AG04450 (cell line): ENCODE measurements at regions of chr9 and their contacts with region 1.

Region 1: GRCh38 chr9:87684627-87685219 is 41.2 kb upstream of the CTSL start:
- DNase-seq: no peak
- H3K4me3 ChIP-seq: no peak overlapping the region
- H3K27ac ChIP-seq: no peak overlapping the region
- H3K27me3 ChIP-seq: no peaks in the 10 kb centered on the region
- CTCF ChIP-seq: peak; percentile 80

Region 2: GRCh38 chr9:87713278-87713987 is 28.7 kb after region 1 on chr9:
- CTCF ChIA-PET with region 1: interaction called, 15 read pairs
- POLR2A ChIA-PET with region 1: interaction called, 3 read pairs
- DNase-seq: peak; percentile 94
- H3K4me3 ChIP-seq: peak overlapping the region; percentile 37
- H3K27ac ChIP-seq: peak overlapping the region; percentile 96
- H3K27me3 ChIP-seq: no peaks in the 10 kb centered on the region
- CTCF ChIP-seq: no peak; the same call in 1 of the 2 replicates

Region 3: DNA sequence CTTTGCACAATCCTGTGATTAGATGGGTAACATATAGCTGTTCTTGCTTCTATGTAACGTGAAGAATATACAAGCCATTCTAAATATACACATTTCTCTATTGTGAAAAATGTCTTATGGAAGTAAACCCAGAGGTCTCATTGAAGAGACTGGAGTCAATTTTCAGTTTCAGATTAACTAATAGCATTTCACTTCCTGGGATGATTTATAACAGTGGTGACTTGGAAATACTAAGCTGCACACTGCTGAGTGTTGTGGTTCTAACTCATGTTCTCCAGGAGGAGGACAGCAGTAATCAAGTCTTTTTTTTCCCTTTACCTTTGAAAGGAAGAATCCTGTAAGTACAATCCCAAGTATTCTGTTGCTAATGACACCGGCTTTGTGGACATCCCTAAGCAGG is 44.5 kb after region 1 on chr9:
- CTCF ChIA-PET with region 1: interaction called, 13 read pairs
- POLR2A ChIA-PET with region 1: interaction called, 5 read pairs
- DNase-seq: no peak
- H3K4me3 ChIP-seq: no peak overlapping the region
- H3K27ac ChIP-seq: no peak overlapping the region
- H3K27me3 ChIP-seq: no peaks in the 10 kb centered on the region
- CTCF ChIP-seq: no peak

Region 4: DNA sequence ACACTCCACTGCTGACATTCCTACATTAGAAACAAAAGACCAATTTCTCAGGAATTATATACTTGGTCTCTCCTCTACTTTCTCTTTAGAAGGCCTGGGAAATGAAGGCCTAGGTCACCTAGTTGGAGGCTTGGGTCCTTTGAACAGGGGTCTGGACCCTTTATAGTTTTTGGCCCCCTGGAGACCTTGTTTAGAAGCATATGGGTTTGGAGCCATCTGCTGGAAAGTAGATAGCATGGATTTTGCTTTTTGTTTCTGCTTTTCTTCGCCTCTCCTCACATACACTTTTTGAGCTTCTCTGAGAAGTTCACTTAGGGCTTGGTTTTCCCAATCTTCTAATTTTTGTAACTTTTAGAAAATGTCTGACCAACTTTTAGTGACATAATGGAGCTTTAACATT is 356.7 kb after region 1 on chr9:
- CTCF ChIA-PET with region 1: interaction called, 16 read pairs
- POLR2A ChIA-PET with region 1: interaction called, 3 read pairs
- DNase-seq: no peak
- H3K4me3 ChIP-seq: no peak overlapping the region
- H3K27ac ChIP-seq: no peak overlapping the region
- H3K27me3 ChIP-seq: no peaks in the 10 kb centered on the region
- CTCF ChIP-seq: peak; percentile 64